ENCODE measurements at regions of chr6 and their contacts with region 1.

Region 1: GRCh38 chr6:116836606-116837342 is 7.9 kb upstream of the GPRC6A start:
- DNase-seq: no peak
- H3K4me3 Mint-ChIP-seq: no peak overlapping the region
- H3K27ac Mint-ChIP-seq: no peak overlapping the region
- H3K4me1 Mint-ChIP-seq: peaks cover 5% of the 10 kb centered on the region
- H3K27me3 Mint-ChIP-seq: peaks cover 45% of the 10 kb centered on the region
- CTCF ChIP-seq: no peak

Region 2: DNA sequence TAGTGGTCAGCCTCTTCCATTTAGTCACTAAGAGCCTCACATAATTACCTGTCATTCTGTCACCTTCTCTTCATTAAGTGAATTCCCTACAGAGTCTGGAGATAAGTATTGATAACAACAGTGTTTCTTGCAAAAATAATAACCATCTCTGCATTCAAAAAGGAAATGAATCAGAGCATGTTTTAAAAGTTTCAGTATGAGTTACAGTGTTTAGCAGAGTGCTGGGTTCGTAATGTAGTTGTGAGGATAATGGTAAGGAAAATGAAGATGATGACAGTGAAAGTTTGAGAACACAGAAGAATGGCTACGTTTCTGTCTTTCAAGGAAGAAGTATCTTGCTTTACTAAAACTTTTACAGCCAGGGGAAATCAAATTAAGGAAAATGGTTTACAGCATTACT is 39.2 kb before region 1 on chr6:
- CTCF ChIA-PET with region 1: no interaction called
- POLR2A ChIA-PET with region 1: no interaction called
- intact Hi-C with region 1: loop called (anchors 5 kb)
- DNase-seq: no peak
- H3K4me3 Mint-ChIP-seq: no peak overlapping the region
- H3K27ac Mint-ChIP-seq: no peak overlapping the region
- H3K4me1 Mint-ChIP-seq: no peaks in the 10 kb centered on the region
- H3K27me3 Mint-ChIP-seq: peaks cover 42% of the 10 kb centered on the region
- CTCF ChIP-seq: no peak